Gastrocnemius medialis (tissue), 4 donors: ENCODE measurements at regions of chr12 and their contacts with region 1.

Region 1: GRCh38 chr12:21248679-21249078 is 86.0 kb downstream of the SLCO1A2 start:
- DNase-seq: no peak
- ATAC-seq: no peak
- H3K4me3 ChIP-seq: no peak overlapping the region
- H3K27ac ChIP-seq: no peak overlapping the region
- H3K4me1 ChIP-seq: no peaks in the 10 kb centered on the region
- H3K27me3 ChIP-seq: no peaks in the 10 kb centered on the region
- CTCF ChIP-seq: no peak
- POLR2A ChIP-seq: no peak

Region 2: DNA sequence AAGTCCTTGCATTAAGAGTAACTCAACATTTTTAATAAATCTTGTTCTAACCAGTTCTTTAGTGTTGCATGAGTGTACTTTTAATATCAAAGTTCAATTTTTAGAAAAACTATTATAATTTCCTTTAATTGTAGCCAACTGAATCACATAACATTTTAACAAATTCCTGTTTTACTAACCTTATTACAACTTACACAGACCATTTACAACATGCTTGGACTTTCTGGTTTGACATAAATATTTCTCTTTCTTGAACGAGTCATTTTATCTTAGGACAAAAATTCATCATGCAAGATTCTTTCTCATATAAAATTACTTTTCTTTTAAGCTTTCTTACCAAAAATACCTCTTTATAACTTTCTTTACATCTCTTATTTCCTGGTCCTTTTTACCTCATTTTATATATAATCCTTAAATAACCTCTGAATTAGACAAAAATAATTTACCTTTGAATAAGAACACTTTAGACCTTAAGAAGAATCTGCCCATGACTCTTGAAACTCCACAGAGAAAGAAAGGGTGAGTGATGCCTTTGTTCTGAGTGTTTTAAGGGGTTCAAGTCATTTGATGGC is 82.1 kb after region 1 on chr12:
- in situ Hi-C with region 1: loop called in 1 of 4 experiments (anchors 25 kb)
- intact Hi-C with region 1: no loop called
- DNase-seq: no peak
- ATAC-seq: no peak
- H3K4me3 ChIP-seq: no peak overlapping the region
- H3K27ac ChIP-seq: no peak overlapping the region
- H3K4me1 ChIP-seq: no peaks in the 10 kb centered on the region
- H3K27me3 ChIP-seq: no peaks in the 10 kb centered on the region
- CTCF ChIP-seq: no peak
- POLR2A ChIP-seq: no peak